ENCODE measurements at regions of chr12 and their contacts with region 1.

Region 1: GRCh38 chr12:94207849-94208621 is 59.7 kb downstream of the PLXNC1 start:
- DNase-seq: peak; percentile 39
- ATAC-seq: peak; percentile 81
- H3K4me3 Mint-ChIP-seq: peak overlapping the region; percentile 82
- H3K27ac Mint-ChIP-seq: peak overlapping the region; percentile 98
- H3K4me1 Mint-ChIP-seq: peaks cover 68% of the 10 kb centered on the region
- H3K27me3 Mint-ChIP-seq: no peaks in the 10 kb centered on the region
- CTCF ChIP-seq: no peak

Region 2: GRCh38 chr12:93943766-93944165 is 264.3 kb before region 1 on chr12:
- CTCF ChIA-PET with region 1: no interaction called
- POLR2A ChIA-PET with region 1: no interaction called
- intact Hi-C with region 1: no loop called
- DNase-seq: no peak
- ATAC-seq: no peak
- H3K4me3 Mint-ChIP-seq: no peak overlapping the region
- H3K27ac Mint-ChIP-seq: no peak overlapping the region
- H3K4me1 Mint-ChIP-seq: no peaks in the 10 kb centered on the region
- H3K27me3 Mint-ChIP-seq: peaks cover 7% of the 10 kb centered on the region
- CTCF ChIP-seq: no peak

Region 3: DNA sequence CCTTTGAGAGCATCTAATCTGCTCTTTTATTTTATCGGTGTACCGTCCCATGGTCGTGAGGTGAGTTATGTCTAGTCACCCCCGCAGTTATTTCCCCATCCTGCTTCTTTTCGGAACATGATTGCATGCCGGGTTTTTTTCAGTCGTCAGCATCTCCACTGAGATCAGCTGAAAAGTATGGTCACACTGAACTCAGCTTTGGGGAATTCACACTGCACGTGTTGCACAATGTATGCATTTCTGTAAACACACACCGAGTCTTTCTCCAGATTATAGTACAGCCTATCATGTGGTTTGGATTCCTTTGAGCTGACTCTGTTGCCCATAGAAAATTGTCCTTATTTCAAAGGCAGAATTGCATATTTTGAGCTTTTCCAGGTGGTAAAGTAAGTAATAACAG is 35.1 kb before region 1 on chr12:
- CTCF ChIA-PET with region 1: interaction called, 4 read pairs
- POLR2A ChIA-PET with region 1: interaction called, 19 read pairs
- intact Hi-C with region 1: loop called (anchors 1 kb)
- DNase-seq: no peak
- ATAC-seq: no peak
- H3K4me3 Mint-ChIP-seq: no peak overlapping the region
- H3K27ac Mint-ChIP-seq: peak overlapping the region; percentile 30
- H3K4me1 Mint-ChIP-seq: peaks cover 43% of the 10 kb centered on the region
- H3K27me3 Mint-ChIP-seq: no peaks in the 10 kb centered on the region
- CTCF ChIP-seq: no peak

Region 4: GRCh38 chr12:94222351-94223084 is 14.5 kb after region 1 on chr12:
- CTCF ChIA-PET with region 1: interaction called, 8 read pairs
- POLR2A ChIA-PET with region 1: interaction called, 22 read pairs
- intact Hi-C with region 1: loop called (anchors 1 kb)
- DNase-seq: no peak
- ATAC-seq: peak; percentile 55
- H3K4me3 Mint-ChIP-seq: peak overlapping the region; percentile 52
- H3K27ac Mint-ChIP-seq: peak overlapping the region; percentile 76
- H3K4me1 Mint-ChIP-seq: peaks cover 38% of the 10 kb centered on the region
- H3K27me3 Mint-ChIP-seq: no peaks in the 10 kb centered on the region
- CTCF ChIP-seq: no peak

Region 5: DNA sequence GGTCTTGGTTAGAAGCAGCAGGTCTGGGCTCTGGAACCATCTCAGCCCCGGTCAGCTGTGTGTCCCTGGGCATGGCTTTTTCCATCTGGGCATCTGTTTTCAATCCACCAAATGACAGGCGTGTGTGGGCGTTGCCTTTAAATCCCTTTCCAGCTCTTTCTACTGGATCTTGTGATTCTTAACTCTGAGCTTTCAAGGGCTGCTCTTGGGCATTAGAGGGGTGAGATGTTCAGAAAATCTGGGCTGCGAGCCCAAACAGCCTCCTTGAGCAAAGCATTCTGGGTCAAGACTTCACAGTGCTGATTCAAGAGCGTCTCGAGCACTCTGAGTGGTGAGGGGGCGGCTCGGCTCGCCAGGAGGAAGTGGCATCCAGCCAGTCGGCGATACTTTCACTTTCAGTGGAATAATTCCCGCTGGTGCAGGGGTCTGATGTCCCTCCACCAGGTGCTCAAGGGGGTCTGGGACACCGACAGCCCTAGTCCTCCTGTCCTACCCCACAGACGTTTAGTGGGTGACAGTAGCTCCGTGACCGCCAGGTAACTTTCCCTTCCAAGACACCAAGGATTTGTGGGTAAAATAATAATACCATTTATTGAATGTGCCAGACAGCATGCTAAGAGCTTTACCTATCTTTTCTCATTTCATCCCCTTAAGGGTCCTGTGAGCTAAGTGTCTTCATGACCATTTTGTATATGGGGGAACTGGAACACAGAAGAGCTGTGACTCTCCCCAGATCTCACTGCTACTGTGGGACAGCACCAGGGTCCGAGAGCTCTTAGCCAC is 54.4 kb after region 1 on chr12:
- CTCF ChIA-PET with region 1: no interaction called
- POLR2A ChIA-PET with region 1: interaction called, 36 read pairs
- intact Hi-C with region 1: loop called (anchors 1 kb)
- DNase-seq: peak; percentile 63
- ATAC-seq: peak; percentile 82
- H3K4me3 Mint-ChIP-seq: peak overlapping the region; percentile 97
- H3K27ac Mint-ChIP-seq: peak overlapping the region; percentile 99
- H3K4me1 Mint-ChIP-seq: peaks cover 64% of the 10 kb centered on the region
- H3K27me3 Mint-ChIP-seq: no peaks in the 10 kb centered on the region
- CTCF ChIP-seq: no peak

Region 6: GRCh38 chr12:94435511-94435927 is 227.5 kb after region 1 on chr12:
- CTCF ChIA-PET with region 1: interaction called, 4 read pairs
- POLR2A ChIA-PET with region 1: no interaction called
- intact Hi-C with region 1: loop called (anchors 5 kb)
- DNase-seq: no peak
- ATAC-seq: no peak
- H3K4me3 Mint-ChIP-seq: no peak overlapping the region
- H3K27ac Mint-ChIP-seq: no peak overlapping the region
- H3K4me1 Mint-ChIP-seq: peaks cover 12% of the 10 kb centered on the region
- H3K27me3 Mint-ChIP-seq: no peaks in the 10 kb centered on the region
- CTCF ChIP-seq: no peak

Region 7: DNA sequence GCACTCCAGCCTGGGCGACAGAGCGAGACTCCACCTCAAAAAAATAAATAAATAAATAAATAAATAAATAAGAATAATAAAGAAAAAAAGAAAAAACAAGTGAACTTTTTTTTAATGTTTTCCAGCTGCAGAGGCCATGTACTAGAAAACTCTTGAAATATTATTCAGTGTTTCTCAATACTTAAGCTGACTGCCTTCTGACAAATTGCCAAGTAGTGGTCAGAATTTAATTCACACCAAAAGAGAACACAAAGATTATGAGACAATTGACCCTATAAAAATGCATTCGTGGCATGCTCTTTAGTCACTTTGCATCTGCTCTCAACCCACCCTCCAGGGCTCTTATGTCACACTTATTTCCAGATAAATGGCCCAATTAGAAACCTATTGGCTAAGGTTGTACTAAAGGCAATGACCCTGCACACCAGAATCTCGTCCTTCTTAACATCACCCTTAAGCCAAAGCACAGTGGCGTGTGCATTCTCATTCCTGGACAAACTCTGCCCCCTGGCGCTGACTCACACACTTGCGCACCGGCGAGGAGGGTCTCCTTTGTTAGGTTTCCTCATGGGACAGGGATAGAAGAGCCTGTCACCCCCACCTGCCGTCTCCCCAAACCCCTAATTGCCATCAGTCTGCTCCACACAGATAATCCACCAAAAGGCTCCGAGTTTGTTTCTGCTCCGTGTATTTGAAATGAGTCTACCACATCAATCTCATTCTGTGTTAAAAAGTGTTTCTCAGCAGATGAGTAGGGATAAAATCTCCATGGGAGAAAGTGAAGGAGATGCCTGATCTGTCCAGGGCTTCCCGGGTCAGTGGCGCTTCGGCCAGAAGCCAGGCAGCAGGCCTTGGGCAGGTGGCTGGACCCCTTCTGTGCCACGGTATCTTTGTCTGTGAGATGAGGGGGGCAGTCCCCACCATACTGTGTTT is 324.7 kb after region 1 on chr12:
- CTCF ChIA-PET with region 1: no interaction called
- POLR2A ChIA-PET with region 1: no interaction called
- intact Hi-C with region 1: loop called (anchors 2 kb)
- DNase-seq: peak; percentile 63
- ATAC-seq: peak; percentile 88
- H3K4me3 Mint-ChIP-seq: no peak overlapping the region
- H3K27ac Mint-ChIP-seq: no peak overlapping the region
- H3K4me1 Mint-ChIP-seq: peaks cover 5% of the 10 kb centered on the region
- H3K27me3 Mint-ChIP-seq: peaks cover 9% of the 10 kb centered on the region
- CTCF ChIP-seq: no peak

Region 8: DNA sequence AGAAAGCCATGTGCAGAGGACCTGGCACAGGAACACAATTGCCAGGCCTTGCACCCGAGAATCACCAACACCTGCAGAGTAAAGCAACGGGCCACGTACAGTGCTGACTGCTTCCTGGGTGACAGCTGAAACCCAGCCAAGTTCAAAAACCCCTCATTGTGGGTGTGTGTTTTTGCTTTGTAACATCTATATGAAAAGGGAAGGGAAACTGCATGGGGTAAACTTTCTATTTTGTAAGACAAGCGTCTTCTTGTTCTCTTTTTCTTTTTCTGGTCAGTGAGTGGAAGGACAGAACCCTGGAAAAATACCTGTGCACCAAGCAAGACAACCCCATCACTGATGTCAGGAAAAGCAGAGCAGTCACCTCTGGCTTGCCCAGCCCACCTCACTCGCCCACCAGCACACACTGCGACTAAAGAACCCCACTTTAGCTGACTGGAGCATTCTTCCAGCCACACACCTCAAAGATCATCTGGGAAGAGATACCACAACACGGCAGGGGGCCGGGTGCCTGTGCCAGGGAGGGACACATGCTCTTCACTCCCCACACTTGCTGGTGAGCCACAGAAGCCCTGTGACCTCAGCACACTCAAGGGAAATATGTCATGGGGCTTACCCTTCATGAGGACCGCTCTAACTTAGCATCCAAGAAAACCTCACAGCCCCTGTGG is 623.2 kb after region 1 on chr12:
- CTCF ChIA-PET with region 1: no interaction called
- POLR2A ChIA-PET with region 1: no interaction called
- intact Hi-C with region 1: loop called (anchors 1 kb)
- DNase-seq: peak; percentile 40
- ATAC-seq: peak; percentile 91
- H3K4me3 Mint-ChIP-seq: peak overlapping the region; percentile 81
- H3K27ac Mint-ChIP-seq: peak overlapping the region; percentile 99
- H3K4me1 Mint-ChIP-seq: peaks cover 58% of the 10 kb centered on the region
- H3K27me3 Mint-ChIP-seq: no peaks in the 10 kb centered on the region
- CTCF ChIP-seq: no peak

Measured in activated B cell treated with CpG ODN at 0.5 μM for 24 hours (primary cell).